IMR-90 (cell line): ENCODE measurements at regions of chr16 and their contacts with region 1.

Region 1: DNA sequence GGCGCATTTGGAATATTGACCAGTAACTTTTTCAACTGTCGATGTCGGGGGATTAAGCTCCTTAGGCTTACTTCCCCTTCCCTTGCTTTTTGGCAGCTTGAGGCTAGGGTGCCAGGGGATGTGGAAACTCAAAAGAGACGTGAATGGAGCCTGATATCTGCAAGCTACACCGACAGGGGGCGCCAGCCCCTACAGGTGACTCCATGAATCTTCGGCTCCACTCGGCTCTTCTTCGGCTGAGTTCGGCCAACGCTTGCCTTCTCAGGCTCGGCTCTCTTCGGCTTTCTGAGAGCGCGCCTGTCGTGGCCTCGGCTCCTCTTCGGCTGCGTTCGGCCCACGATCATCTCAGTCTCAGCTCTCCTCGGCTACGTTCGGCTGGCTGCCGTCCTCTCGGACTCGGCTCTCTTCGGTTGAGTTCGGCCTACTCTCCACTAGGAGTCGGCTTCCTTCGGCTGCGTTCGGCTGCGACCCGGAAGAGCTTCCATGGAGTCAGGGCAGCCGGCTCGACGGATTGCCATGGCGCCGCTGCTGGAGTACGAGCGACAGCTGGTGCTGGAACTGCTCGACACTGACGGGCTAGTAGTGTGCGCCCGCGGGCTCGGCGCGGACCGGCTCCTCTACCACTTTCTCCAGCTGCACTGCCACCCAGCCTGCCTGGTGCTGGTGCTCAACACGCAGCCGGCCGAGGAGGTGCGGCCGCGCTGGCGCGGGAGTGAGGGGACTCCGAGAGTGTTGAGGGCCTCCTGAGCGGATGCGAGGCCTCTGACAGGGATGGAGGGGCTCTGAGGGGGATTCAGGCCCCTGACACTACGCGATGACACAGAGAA is at the start of gene ERCC4:
- DNase-seq: peak; percentile 98
- ATAC-seq: peak; percentile 98
- H3K4me3 ChIP-seq: peak within 1 kb of the TSS; percentile 80
- H3K27ac ChIP-seq: peak within 1 kb of the TSS; percentile 86
- H3K4me1 ChIP-seq: peaks cover 7% of the 10 kb centered on the region
- H3K27me3 ChIP-seq: peaks cover 6% of the 10 kb centered on the region
- CTCF ChIP-seq: peak; percentile 93
- POLR2A ChIP-seq: peak; percentile 68; the same call in 1 of the 2 replicates
- RAD21 ChIP-seq: peak; percentile 43
- total RNA-seq, gene ERCC4: 10.0 and 19.2 TPM in 2 replicates

Region 2: GRCh38 chr16:13866073-13866472 is 53.8 kb before region 1 on chr16:
- CTCF ChIA-PET with region 1: interaction called, 6 read pairs
- POLR2A ChIA-PET with region 1: no interaction called
- dilution Hi-C with region 1: no loop called
- in situ Hi-C with region 1: no loop called
- intact Hi-C with region 1: loop called (anchors 1 kb)
- DNase-seq: peak; percentile 73
- ATAC-seq: peak; percentile 100
- H3K4me3 ChIP-seq: no peak overlapping the region
- H3K27ac ChIP-seq: no peak overlapping the region
- H3K4me1 ChIP-seq: no peaks in the 10 kb centered on the region
- H3K27me3 ChIP-seq: no peaks in the 10 kb centered on the region
- CTCF ChIP-seq: peak; percentile 68
- POLR2A ChIP-seq: no peak
- RAD21 ChIP-seq: peak; percentile 57

Region 3: GRCh38 chr16:13906168-13907089 is 13.5 kb before region 1 on chr16:
- CTCF ChIA-PET with region 1: interaction called, 12 read pairs
- POLR2A ChIA-PET with region 1: no interaction called
- dilution Hi-C with region 1: no loop called
- in situ Hi-C with region 1: no loop called
- intact Hi-C with region 1: no loop called
- DNase-seq: no peak
- ATAC-seq: no peak
- H3K4me3 ChIP-seq: no peak overlapping the region
- H3K27ac ChIP-seq: no peak overlapping the region
- H3K4me1 ChIP-seq: peaks cover 3% of the 10 kb centered on the region; the same call in 1 of the 2 replicates
- H3K27me3 ChIP-seq: peaks cover 6% of the 10 kb centered on the region
- CTCF ChIP-seq: no peak
- POLR2A ChIP-seq: no peak
- RAD21 ChIP-seq: no peak

Region 4: GRCh38 chr16:14011846-14012245 is 92.0 kb after region 1 on chr16:
- CTCF ChIA-PET with region 1: interaction called, 5 read pairs
- POLR2A ChIA-PET with region 1: no interaction called
- dilution Hi-C with region 1: no loop called
- in situ Hi-C with region 1: no loop called
- intact Hi-C with region 1: loop called (anchors 1 kb)
- DNase-seq: no peak
- ATAC-seq: no peak
- H3K4me3 ChIP-seq: no peak overlapping the region
- H3K27ac ChIP-seq: no peak overlapping the region
- H3K4me1 ChIP-seq: peaks cover 11% of the 10 kb centered on the region
- H3K27me3 ChIP-seq: peaks cover 8% of the 10 kb centered on the region
- CTCF ChIP-seq: no peak
- POLR2A ChIP-seq: no peak
- RAD21 ChIP-seq: no peak

Region 5: DNA sequence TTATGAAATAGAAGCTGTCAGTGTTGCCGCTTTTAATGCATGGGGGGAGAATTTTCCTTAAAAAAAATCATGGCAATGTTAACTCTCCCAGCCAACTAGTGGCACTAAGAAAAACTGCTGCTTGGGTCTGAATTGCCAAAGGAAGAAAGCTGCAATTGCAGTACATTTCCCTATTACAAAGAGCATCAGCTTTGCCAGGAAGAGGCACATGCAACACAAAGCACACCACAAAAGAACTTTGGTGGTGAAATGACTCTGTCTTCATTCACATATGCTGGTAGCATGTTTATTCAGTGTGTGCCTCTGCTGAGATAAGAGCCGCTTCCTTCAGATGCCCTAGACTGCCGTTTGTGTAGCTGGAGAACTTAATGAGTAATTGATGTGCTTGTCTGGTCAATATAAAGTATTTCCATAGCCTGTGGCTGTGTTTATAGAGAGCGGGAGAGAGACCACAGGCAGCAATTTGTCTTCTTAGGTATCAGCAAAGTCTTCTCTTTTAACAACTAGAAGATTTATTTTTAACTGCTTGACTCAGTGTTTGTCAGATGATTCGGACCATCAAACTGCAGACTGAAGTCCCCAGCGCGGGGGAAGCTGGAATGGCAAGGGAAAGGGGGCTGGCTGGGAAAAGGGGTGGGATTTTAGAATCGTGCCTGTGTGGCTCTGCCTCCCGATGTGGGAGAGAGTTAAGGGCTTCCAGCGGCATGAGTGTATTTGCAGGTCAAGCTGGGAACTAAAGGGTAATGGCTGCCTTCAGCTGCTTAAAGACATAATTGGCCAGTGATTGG is 266.3 kb after region 1 on chr16:
- CTCF ChIA-PET with region 1: interaction called, 11 read pairs
- POLR2A ChIA-PET with region 1: no interaction called
- dilution Hi-C with region 1: no loop called
- in situ Hi-C with region 1: no loop called
- intact Hi-C with region 1: loop called (anchors 5 kb)
- DNase-seq: peak; percentile 79
- ATAC-seq: peak; percentile 79
- H3K4me3 ChIP-seq: peak overlapping the region; percentile 10; the same call in 1 of the 2 replicates
- H3K27ac ChIP-seq: no peak overlapping the region
- H3K4me1 ChIP-seq: peaks cover 8% of the 10 kb centered on the region
- H3K27me3 ChIP-seq: 0 out of 2 replicates have a peak, but pooled peaks cover 2% of the 10 kb centered on the region
- CTCF ChIP-seq: peak; percentile 42
- POLR2A ChIP-seq: no peak
- RAD21 ChIP-seq: peak; percentile 37

Region 6: DNA sequence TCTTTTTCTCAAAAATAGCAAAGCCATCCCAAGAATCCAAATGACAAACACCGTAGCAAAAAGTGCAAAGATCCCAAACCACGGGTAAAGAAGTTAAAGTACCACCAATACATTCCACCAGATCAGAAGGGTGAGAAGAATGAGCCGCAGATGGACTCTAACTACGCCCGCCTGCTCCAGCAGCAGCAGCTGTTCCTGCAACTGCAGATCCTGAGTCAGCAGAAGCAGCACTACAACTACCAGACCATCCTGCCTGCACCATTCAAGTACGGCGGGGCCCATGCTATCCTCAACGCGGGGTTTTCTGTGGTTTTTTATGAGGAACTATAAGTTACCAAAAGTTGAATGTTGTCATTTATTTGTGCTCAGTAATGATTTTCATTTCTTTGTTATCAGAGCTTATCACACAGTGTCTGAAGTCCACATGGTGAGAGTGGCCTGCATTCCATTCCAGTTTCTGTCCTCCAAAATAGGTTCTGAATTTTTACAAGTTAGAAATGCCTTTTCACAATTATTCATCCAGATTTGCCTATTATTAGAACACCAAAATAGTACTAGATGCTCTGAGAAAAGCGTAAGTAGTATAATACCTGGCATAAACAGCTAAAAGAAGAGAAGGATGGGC is 320.4 kb after region 1 on chr16:
- CTCF ChIA-PET with region 1: no interaction called
- POLR2A ChIA-PET with region 1: no interaction called
- dilution Hi-C with region 1: no loop called
- in situ Hi-C with region 1: loop called (anchors 10 kb)
- intact Hi-C with region 1: loop called (anchors 5 kb)
- DNase-seq: no peak
- ATAC-seq: peak; percentile 72
- H3K4me3 ChIP-seq: no peak overlapping the region
- H3K27ac ChIP-seq: no peak overlapping the region
- H3K4me1 ChIP-seq: no peaks in the 10 kb centered on the region
- H3K27me3 ChIP-seq: no peaks in the 10 kb centered on the region
- CTCF ChIP-seq: no peak
- POLR2A ChIP-seq: no peak
- RAD21 ChIP-seq: no peak

Region 7: DNA sequence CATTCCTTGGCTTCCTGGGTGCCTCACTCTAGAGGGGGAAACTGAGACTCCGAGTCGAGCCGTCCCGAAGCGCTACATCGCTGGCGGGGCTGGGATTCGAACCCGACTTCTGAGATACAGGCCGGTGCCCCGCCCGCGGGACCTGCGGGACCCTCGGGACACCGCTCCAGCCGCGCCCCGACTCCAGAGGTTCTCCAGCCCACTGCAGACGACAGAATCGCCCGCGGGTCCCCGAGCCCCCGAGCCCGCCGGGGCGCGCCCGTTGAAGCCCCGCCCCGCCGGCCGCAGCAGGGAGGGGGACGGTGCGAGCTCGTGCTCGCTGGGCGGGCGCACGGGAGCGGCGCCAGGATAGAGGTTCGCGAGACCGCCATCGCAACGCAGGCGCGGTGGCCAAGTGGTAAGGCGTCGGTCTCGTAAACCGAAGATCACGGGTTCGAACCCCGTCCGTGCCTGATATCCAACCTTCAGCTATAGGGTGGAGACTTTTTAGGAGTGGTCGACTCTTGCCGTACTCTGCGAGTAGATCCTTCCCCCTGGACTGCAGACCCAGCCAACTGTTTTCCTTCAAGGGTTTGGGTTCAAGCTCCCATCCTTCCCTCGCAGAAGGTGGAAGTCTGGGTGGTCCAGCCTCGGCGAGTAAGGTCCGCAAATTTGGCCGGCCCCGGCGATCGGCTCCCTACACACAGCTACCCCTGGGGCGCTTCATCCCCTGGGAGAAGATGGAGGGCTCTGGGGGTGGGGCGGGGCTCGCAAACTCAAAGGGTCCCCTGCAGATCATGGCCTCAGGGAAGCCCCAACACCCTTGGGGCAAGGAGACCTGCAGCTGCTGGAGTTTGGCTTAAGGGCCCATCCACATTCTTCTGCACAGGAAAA is 365.9 kb after region 1 on chr16:
- CTCF ChIA-PET with region 1: interaction called, 5 read pairs
- POLR2A ChIA-PET with region 1: no interaction called
- dilution Hi-C with region 1: no loop called
- in situ Hi-C with region 1: loop called (anchors 10 kb)
- intact Hi-C with region 1: loop called (anchors 1 kb)
- DNase-seq: peak; percentile 97
- ATAC-seq: peak; percentile 95
- H3K4me3 ChIP-seq: peak overlapping the region; percentile 66
- H3K27ac ChIP-seq: peak overlapping the region; percentile 26; the same call in 1 of the 2 replicates
- H3K4me1 ChIP-seq: no peaks in the 10 kb centered on the region
- H3K27me3 ChIP-seq: no peaks in the 10 kb centered on the region
- CTCF ChIP-seq: no peak
- POLR2A ChIP-seq: no peak
- RAD21 ChIP-seq: no peak